A549 (cell line): ENCODE measurements at regions of chr11 and their contacts with region 1.

Region 1: DNA sequence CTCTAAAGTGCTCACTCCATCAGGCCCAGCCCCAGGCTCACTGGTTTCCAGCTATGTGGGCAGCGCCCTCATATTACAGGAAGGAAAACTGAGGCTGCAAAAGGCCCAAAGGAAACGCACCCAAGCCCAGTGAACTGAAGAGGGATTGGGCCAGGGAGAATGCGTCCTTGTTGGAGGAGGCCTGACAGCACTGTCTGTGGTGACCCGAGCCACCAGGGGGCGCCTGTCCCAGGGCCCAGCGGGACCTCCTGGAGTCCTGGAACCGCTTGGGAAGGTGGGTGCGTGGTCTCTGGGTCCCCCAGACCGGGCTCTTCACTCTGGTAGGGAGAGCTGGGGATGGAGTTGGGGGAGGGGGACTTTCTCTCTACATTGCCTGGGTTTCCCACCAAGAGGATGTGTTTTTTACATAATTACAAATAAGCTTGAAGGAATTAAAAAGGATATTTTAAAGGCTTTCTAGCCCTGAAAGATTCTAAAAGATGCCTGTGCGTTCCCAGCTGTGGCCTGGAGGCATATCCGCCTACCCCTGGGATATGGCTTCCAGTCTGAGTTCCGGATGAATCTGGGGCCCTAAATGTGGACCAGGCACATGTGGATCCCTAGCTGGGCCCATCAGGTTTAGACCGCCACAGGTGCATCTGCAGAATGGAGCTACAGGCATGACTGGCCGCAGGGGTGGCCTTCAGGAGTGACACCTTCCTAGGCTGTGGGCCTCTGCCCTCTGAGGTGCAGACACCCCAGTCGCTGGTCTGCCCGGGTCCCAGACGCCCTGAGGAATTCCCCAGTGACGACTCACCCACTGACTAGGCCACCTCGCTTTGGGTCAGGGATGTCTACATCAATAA is 4.2 kb downstream of the SPI1 start:
- DNase-seq: peak; percentile 74 to 84
- ATAC-seq: peak; percentile 88 to 96
- H3K4me3 ChIP-seq: no peak overlapping the region
- H3K27ac ChIP-seq: peak overlapping the region; percentile 31 to 58; a peak in 3 of 6 replicates
- H3K4me1 ChIP-seq: peaks cover 21% of the 10 kb centered on the region
- CTCF ChIP-seq: peak; percentile 93
- EP300 ChIP-seq: no peak
- POLR2A ChIP-seq: no peak
- RAD21 ChIP-seq: peak; percentile 65 to 68

Region 2: DNA sequence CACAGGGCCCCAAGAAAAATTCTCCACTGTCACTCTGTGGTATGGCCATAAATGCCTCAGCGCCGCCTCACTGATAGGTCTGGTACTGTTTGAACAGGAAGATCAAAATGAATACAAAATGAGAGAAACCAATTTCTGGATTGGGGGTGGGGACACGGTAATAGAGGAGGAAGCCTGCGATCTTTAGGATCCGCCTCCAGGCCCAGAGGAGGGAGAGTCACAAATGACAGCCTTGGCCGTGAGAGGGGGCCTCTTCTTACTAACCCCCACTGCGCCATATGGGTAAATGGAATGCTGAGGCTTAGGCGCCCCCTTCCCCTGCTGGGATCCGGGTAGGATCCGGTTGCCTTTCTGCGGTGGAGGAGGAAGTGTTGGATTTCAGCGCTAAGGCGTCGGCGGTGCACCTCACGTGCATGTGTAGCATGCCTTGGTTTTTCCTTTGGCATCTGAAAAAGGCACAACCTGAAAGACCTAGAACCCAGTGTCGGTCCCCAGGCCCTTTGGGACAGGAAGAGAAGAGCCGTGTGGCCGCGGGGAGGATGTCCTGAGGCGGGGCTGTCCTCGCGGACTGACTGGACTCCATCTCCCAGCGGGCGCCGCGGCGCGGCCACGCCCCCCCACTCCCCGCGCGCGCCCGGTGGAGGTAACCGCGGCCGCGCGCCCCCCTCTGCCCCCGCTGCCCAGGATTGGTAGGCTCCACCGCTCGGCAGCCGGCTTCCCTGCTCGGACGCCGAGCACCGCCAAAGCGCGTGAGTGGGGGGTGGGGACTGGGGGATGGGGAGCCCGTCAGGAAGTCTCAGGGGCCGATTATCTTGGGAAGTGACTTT is 104.9 kb before region 1 on chr11:
- CTCF ChIA-PET with region 1: interaction called, 13 read pairs
- POLR2A ChIA-PET with region 1: no interaction called
- DNase-seq: peak; percentile 88 to 89
- ATAC-seq: peak; percentile 83 to 86
- H3K4me3 ChIP-seq: peak overlapping the region; percentile 72
- H3K27ac ChIP-seq: peak overlapping the region; percentile 95 to 99
- H3K4me1 ChIP-seq: peaks cover 30% of the 10 kb centered on the region
- CTCF ChIP-seq: no peak; the same call in 2 of the 3 replicates
- EP300 ChIP-seq: no peak
- POLR2A ChIP-seq: peak; percentile 55
- RAD21 ChIP-seq: peak in 1 of 2 experiments; percentile 8; a peak in 1 of 5 replicates

Region 3: GRCh38 chr11:47305734-47306483 is 68.2 kb before region 1 on chr11:
- CTCF ChIA-PET with region 1: interaction called, 15 read pairs
- POLR2A ChIA-PET with region 1: no interaction called
- DNase-seq: no peak
- ATAC-seq: no peak
- H3K4me3 ChIP-seq: no peak overlapping the region
- H3K27ac ChIP-seq: no peak overlapping the region
- H3K4me1 ChIP-seq: no peaks in the 10 kb centered on the region
- CTCF ChIP-seq: no peak
- EP300 ChIP-seq: no peak
- POLR2A ChIP-seq: no peak
- RAD21 ChIP-seq: no peak

Region 4: DNA sequence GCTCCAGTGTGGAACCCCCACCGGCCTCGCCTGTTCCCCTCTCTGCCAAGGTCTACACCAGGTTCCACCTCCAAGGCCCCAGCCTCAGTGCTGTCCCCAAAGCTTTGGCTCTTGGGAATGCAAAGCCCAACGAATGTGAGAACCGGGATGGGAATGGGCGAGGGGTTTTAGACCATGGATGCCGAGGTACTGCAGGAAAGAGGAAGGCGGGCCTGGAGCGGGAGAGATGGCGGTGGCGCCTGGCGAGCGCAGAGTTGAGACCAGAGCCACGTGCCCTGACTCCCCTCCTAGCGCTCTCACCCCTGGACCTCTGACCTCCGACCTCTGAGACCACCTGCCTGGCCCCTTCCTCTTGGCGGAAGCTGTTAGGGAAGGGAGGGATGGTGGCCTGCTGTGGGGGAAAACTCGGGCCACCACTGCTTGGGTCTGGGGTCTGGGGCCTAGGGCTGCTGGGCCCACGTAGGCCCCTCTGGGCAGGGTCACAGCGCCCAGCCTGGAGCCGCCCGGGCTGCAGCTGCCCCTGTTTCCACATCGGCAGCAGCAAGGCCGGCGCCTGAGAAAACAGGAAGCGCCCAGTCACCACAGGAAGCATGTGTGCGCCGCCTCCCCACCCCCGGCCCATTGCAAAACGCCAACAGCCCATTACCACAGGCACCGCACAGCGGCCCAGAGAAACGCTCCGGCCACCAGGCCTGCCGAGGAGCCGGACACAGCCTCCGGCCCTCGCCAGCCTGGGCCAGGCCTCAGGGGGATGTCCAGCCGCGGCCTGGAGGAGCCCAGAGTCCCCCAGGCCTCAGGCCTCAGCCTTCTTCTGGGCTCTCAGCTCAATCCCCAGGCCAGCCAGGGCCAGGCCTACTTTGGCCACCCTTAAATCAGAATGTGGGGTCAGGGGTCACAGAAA is 20.5 kb after region 1 on chr11:
- CTCF ChIA-PET with region 1: interaction called, 133 read pairs
- POLR2A ChIA-PET with region 1: no interaction called
- DNase-seq: no peak
- ATAC-seq: no peak
- H3K4me3 ChIP-seq: no peak overlapping the region
- H3K27ac ChIP-seq: peak overlapping the region in 1 of 2 experiments; percentile 22; a peak in 1 of 6 replicates
- H3K4me1 ChIP-seq: no peaks in the 10 kb centered on the region
- CTCF ChIP-seq: no peak
- EP300 ChIP-seq: no peak
- POLR2A ChIP-seq: no peak
- RAD21 ChIP-seq: no peak

Region 5: GRCh38 chr11:47407746-47408590 is 33.9 kb after region 1 on chr11 and contains the start of gene SLC39A13:
- CTCF ChIA-PET with region 1: interaction called, 96 read pairs
- POLR2A ChIA-PET with region 1: interaction called, 3 read pairs
- DNase-seq: peak; percentile 96 to 97
- ATAC-seq: peak; percentile 87 to 93
- H3K4me3 ChIP-seq: peak within 1 kb of the TSS; percentile 92
- H3K27ac ChIP-seq: peak within 1 kb of the TSS; percentile 89 to 93
- H3K4me1 ChIP-seq: peaks cover 19% of the 10 kb centered on the region
- CTCF ChIP-seq: peak; percentile 78
- EP300 ChIP-seq: no peak
- POLR2A ChIP-seq: peak; percentile 87
- RAD21 ChIP-seq: peak; percentile 63 to 84
- polyA plus RNA-seq, gene SLC39A13: 10.8 and 11.7 TPM in 2 replicates

Region 6: GRCh38 chr11:47426061-47426956 is 52.2 kb after region 1 on chr11 and contains the start of gene PSMC3:
- CTCF ChIA-PET with region 1: interaction called, 13 read pairs
- POLR2A ChIA-PET with region 1: no interaction called
- DNase-seq: peak; percentile 92 to 97
- ATAC-seq: peak; percentile 92 to 94
- H3K4me3 ChIP-seq: peak within 1 kb of the TSS; percentile 68
- H3K27ac ChIP-seq: peak within 1 kb of the TSS; percentile 88 to 92
- H3K4me1 ChIP-seq: peaks cover 14% of the 10 kb centered on the region
- CTCF ChIP-seq: no peak
- EP300 ChIP-seq: no peak
- POLR2A ChIP-seq: peak; percentile 49
- RAD21 ChIP-seq: no peak
- polyA plus RNA-seq, gene PSMC3: 201 and 283 TPM in 2 replicates

Region 7: GRCh38 chr11:47532597-47533213 is 158.6 kb after region 1 on chr11:
- CTCF ChIA-PET with region 1: no interaction called
- POLR2A ChIA-PET with region 1: no interaction called
- DNase-seq: no peak
- ATAC-seq: peak in 1 of 2 experiments; percentile 42; a peak in 1 of 6 replicates
- H3K4me3 ChIP-seq: no peak overlapping the region
- H3K27ac ChIP-seq: no peak overlapping the region
- H3K4me1 ChIP-seq: peaks cover 25% of the 10 kb centered on the region
- CTCF ChIP-seq: no peak
- EP300 ChIP-seq: no peak
- POLR2A ChIP-seq: no peak
- RAD21 ChIP-seq: no peak

Region 8: DNA sequence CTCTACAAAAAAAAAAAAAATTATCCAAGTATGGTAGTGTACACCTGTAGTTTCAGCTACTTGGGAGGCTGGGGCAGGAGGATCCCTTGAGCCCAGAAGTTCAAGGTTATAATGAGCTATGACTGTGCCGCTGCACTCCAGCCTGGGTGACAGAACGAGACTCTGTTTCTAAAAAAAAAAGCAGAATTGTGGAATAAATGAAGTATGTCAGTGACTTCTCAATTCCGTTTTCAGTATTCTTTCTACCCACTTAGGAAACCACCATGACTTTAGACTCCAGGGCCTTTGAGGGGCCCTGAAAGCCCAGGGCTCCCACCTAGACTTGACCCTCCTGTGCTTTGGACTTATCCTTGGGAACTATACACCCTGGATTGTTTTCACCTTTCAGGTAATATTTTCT is 480.6 kb after region 1 on chr11:
- CTCF ChIA-PET with region 1: interaction called, 31 read pairs
- POLR2A ChIA-PET with region 1: no interaction called
- DNase-seq: no peak
- ATAC-seq: no peak
- H3K4me3 ChIP-seq: no peak overlapping the region
- H3K27ac ChIP-seq: peak overlapping the region in 1 of 2 experiments; percentile 89; a peak in 2 of 6 replicates
- H3K4me1 ChIP-seq: peaks cover 53% of the 10 kb centered on the region
- CTCF ChIP-seq: no peak
- EP300 ChIP-seq: no peak
- POLR2A ChIP-seq: no peak
- RAD21 ChIP-seq: no peak